Common myeloid progenitor, CD34-positive (primary cell): ENCODE measurements at regions of chr12 and their contacts with region 1.

Region 1: GRCh38 chr12:19186722-19187661 is 57.5 kb downstream of the PLEKHA5 start:
- DNase-seq: peak; percentile 52 to 68 (median 62)
- H3K4me3 ChIP-seq: no peak overlapping the region
- H3K27ac ChIP-seq: no peak overlapping the region
- H3K4me1 ChIP-seq: peaks cover 3 to 29% (median 15%) of the 10 kb centered on the region in 4 experiments
- H3K27me3 ChIP-seq: no peaks in the 10 kb centered on the region

Region 2: GRCh38 chr12:18430425-18431048 is 756.5 kb before region 1 on chr12:
- CTCF ChIA-PET with region 1: interaction called, 20 read pairs
- POLR2A ChIA-PET with region 1: no interaction called
- DNase-seq: peak; percentile 38 to 57 (median 50)
- H3K4me3 ChIP-seq: no peak overlapping the region
- H3K27ac ChIP-seq: no peak overlapping the region
- H3K4me1 ChIP-seq: no peaks in the 10 kb centered on the region
- H3K27me3 ChIP-seq: no peaks in the 10 kb centered on the region

Region 3: GRCh38 chr12:19201661-19202060 is 14.7 kb after region 1 on chr12:
- CTCF ChIA-PET with region 1: interaction called, 17 read pairs
- POLR2A ChIA-PET with region 1: interaction called, 3 read pairs
- DNase-seq: no peak
- H3K4me3 ChIP-seq: no peak overlapping the region
- H3K27ac ChIP-seq: no peak overlapping the region
- H3K4me1 ChIP-seq: no peaks in the 10 kb centered on the region
- H3K27me3 ChIP-seq: no peaks in the 10 kb centered on the region

Region 4: GRCh38 chr12:19223018-19223417 is 36.0 kb after region 1 on chr12:
- CTCF ChIA-PET with region 1: interaction called, 12 read pairs
- POLR2A ChIA-PET with region 1: no interaction called
- DNase-seq: peak; percentile 20 to 69 (median 62)
- H3K4me3 ChIP-seq: no peak overlapping the region
- H3K27ac ChIP-seq: no peak overlapping the region
- H3K4me1 ChIP-seq: no peaks in the 10 kb centered on the region
- H3K27me3 ChIP-seq: no peaks in the 10 kb centered on the region